Activated CD4-positive, alpha-beta T cell treated with anti-CD3 and anti-CD28 coated beads for 36 hours (primary cell): ENCODE measurements at regions of chr1 and their contacts with region 1.

Region 1: DNA sequence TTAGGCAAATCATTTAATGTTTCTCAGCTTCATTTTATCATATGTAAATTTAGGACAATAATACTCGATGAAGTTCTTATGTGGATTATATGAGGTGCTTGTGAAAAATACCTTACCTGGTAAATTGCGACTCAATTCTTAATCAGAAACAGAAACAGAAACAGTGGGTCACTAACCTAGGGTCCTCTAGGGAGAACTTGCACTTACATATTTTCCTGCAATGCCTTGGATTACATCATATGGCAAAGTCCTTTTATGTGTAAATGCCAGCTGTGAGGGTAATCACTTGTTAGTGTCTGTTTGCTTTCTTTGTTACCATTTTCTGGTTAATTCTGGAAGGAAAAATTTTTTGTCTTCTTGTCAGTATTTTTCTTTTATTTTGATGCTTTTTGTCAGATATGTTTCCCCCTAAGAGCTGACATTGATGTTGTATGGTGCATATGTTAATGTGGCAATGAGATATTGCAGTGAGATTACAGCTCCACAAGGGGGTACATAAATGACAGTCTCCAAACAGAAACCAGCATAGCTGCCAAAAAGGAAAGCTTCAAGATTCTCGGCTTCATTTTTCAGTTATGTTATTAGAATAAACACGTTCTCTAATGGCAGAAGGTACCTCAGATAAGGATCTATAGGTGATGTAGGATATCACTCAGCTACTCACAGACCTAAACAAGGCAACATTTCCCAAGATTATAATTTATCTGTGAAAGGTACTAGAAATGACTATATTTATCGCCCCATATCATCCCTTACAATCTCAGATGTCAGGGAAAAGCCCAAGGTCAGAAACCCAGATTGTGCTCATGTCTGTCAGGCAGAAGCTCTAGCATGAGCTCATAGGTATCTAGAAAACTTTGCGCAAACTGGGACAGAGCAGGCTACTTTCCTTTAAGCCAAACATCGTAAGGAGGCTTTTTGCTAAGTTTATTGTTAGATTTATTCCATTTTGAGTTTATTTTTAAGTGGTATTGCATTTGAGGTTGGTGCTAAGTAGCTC is 119.9 kb downstream of the FASLG start:
- DNase-seq: no peak
- ATAC-seq: peak; percentile 86
- H3K4me3 Mint-ChIP-seq: no peak overlapping the region
- H3K27ac Mint-ChIP-seq: peak overlapping the region; percentile 33
- H3K4me1 Mint-ChIP-seq: peaks cover 17% of the 10 kb centered on the region
- H3K27me3 Mint-ChIP-seq: peaks cover 5% of the 10 kb centered on the region

Region 2: DNA sequence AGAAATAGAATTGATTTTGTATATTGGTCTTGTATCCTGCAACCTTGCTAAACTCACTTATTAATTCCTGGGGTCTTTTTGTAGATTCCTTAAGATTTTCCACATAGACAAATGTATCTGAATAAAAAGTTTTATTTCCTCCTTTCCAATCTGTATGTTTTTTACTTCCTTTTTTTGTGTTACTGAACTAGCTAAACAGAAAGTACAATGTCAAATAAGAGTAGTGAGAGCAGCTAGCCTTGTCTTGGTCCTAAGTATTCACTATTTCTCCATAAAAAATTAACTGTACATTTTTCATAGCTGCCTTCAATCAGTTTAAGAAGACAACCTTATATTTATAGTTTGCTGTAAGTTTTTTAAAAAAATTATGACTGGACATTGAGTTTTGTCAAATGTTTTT is 44.9 kb before region 1 on chr1:
- CTCF ChIA-PET with region 1: no interaction called
- POLR2A ChIA-PET with region 1: no interaction called
- intact Hi-C with region 1: no loop called
- DNase-seq: no peak
- ATAC-seq: no peak
- H3K4me3 Mint-ChIP-seq: no peak overlapping the region
- H3K27ac Mint-ChIP-seq: no peak overlapping the region
- H3K4me1 Mint-ChIP-seq: no peaks in the 10 kb centered on the region
- H3K27me3 Mint-ChIP-seq: peaks cover 4% of the 10 kb centered on the region

Region 3: DNA sequence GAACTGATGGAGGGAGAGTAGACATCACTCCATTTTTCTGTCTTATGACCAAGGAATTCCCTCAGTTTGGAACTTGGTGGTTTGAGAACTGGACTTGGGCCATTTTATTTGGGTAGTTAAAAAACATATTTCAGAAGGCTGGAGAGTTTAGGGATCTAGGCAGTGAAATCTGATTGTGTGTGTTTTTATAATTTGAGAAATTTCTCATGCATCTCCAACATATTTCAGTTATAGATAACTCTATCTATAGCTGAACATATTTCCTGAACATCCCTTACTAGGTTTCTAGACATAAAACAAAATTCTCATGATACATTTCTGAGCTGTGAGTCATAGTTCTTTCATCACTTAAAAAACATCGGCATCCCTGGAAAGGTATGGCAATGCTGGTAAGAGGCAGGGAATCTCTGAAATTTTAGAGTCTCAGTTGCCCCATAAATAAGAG is 17.2 kb before region 1 on chr1:
- CTCF ChIA-PET with region 1: interaction called, 12 read pairs
- POLR2A ChIA-PET with region 1: no interaction called
- intact Hi-C with region 1: no loop called
- DNase-seq: no peak
- ATAC-seq: no peak
- H3K4me3 Mint-ChIP-seq: no peak overlapping the region
- H3K27ac Mint-ChIP-seq: no peak overlapping the region
- H3K4me1 Mint-ChIP-seq: peaks cover 43% of the 10 kb centered on the region
- H3K27me3 Mint-ChIP-seq: peaks cover 21% of the 10 kb centered on the region

Region 4: DNA sequence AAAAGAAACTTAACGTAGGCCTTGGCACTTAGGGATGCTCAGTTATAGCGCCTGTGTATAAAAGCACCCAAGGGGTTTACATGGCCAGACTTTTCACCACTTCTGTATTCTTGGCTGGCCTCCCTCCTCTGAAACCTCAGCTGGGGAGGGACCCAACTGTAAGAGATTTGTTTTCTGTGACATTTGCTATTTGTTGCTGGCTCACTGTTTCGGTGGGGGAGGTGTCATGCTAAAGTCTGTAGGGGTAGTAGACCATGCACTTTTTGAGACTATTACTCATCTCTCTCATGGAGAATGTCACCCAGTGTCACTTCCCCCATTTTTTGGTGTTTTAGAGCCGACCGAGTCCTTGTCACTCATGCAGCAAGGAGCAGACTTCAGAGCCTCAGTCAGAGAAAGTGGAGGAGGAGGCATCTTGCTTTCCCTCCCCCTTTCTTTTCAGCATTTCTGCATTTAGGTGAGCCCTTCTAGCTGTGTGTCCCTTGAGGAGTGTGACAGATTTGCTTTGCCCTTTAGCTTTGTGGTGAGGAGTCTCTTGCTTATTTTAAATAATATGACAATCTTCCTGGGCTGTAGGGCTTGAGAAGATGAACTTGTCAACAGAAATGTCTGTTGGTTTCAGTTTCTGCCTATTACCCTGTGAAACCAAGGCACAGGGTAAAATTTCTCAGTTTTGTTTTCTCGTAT is 40.2 kb after region 1 on chr1:
- CTCF ChIA-PET with region 1: interaction called, 6 read pairs
- POLR2A ChIA-PET with region 1: no interaction called
- intact Hi-C with region 1: loop called (anchors 2 kb)
- DNase-seq: peak; percentile 70
- ATAC-seq: peak; percentile 96
- H3K4me3 Mint-ChIP-seq: peak overlapping the region; percentile 3
- H3K27ac Mint-ChIP-seq: peak overlapping the region; percentile 38
- H3K4me1 Mint-ChIP-seq: peaks cover 33% of the 10 kb centered on the region
- H3K27me3 Mint-ChIP-seq: peaks cover 15% of the 10 kb centered on the region

Region 5: DNA sequence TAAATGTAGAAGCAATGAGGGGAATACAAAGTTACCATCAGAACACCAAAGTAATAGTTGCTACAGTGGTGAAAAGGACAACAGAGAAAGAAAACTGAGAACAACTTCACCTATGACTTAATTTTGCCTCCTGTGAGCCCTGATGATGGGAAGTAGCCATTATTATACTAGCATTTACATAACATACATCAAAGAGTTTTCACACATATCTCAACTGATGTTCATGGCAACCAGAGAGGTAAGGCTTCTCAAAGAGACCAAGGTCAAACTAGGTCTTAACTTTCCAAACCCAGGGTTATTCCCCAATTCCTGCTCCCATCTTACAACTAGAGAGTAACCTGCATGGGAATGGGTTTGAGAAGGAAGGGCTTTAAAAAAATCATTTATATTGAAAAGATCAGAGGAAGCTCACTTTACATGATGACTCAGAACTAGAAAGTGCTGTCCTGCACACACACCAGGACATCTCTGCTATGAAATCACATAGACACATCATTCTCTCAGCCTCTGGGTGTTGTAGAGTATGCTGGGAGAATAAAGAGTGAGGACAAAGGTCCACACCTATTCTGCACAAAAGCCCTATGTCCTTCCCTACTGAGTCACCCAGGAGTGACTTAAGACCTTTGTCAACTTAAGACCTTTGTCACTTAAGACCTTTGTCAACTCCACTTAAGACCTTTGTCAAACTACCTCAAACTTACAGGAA is 92.3 kb after region 1 on chr1:
- CTCF ChIA-PET with region 1: interaction called, 6 read pairs
- POLR2A ChIA-PET with region 1: no interaction called
- intact Hi-C with region 1: loop called in 1 of 2 experiments (anchors 1 kb)
- DNase-seq: peak; percentile 10
- ATAC-seq: peak; percentile 54
- H3K4me3 Mint-ChIP-seq: no peak overlapping the region
- H3K27ac Mint-ChIP-seq: no peak overlapping the region
- H3K4me1 Mint-ChIP-seq: peaks cover 33% of the 10 kb centered on the region
- H3K27me3 Mint-ChIP-seq: peaks cover 32% of the 10 kb centered on the region